Pancreas (tissue), 10 donors: ENCODE measurements at regions of chr5 and their contacts with region 1.

Region 1: GRCh38 chr5:142655339-142656267 is 30.3 kb downstream of the FGF1 start:
- DNase-seq: peak; percentile 56 to 94 (median 82)
- ATAC-seq: peak; percentile 85 to 98 (median 96)
- H3K4me3 ChIP-seq: no peak overlapping the region
- H3K27ac ChIP-seq: no peak overlapping the region
- H3K4me1 ChIP-seq: no peaks in the 10 kb centered on the region
- H3K27me3 ChIP-seq: no peaks in the 10 kb centered on the region
- CTCF ChIP-seq: peak; percentile 80 to 97 (median 94)

Region 2: DNA sequence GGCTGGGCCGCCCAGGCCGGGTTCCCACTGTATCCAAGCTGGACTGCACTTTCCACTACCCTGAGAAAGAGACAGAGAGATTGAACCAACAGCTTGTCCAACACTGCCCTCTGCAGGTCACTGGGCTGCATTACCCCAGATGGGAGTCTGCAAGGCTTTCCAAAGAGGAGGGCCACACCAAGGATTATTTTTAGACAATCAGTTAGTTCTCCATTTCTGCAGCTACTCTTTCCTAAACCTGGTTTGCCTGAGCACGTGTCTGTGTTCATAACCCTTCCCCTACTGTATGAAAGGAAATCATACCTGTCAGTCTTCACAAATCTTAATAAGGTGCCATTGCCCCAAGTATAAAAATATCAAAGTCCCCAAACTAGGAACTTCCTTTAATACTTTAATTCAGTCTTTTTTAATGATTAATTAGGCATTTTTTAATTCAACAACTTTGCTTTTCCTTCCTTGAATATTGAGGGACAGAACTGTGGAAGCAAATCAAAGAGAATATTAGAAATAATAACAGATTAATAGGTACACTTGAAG is 43.6 kb after region 1 on chr5:
- intact Hi-C with region 1: loop called in 2 of 3 experiments (anchors 5 kb)
- DNase-seq: peak; percentile 69 to 91 (median 86)
- ATAC-seq: peak; percentile 91 to 98 (median 96)
- H3K4me3 ChIP-seq: no peak overlapping the region
- H3K27ac ChIP-seq: no peak overlapping the region
- H3K4me1 ChIP-seq: peaks cover 0 to 8% (median 0%) of the 10 kb centered on the region in 3 donors
- H3K27me3 ChIP-seq: no peaks in the 10 kb centered on the region
- CTCF ChIP-seq: peak; percentile 83 to 97 (median 91)

Region 3: GRCh38 chr5:142769741-142770631 is 114.4 kb after region 1 on chr5 and contains the start of gene ARHGAP26:
- intact Hi-C with region 1: no loop called
- DNase-seq: peak; percentile 96 to 99 (median 98)
- ATAC-seq: peak; percentile 95 to 99 (median 98)
- H3K4me3 ChIP-seq: peak within 1 kb of the TSS; percentile 70 to 96 (median 80)
- H3K27ac ChIP-seq: peak within 1 kb of the TSS; percentile 81 to 89 (median 87)
- H3K4me1 ChIP-seq: peaks cover 0 to 9% (median 4%) of the 10 kb centered on the region in 3 donors
- H3K27me3 ChIP-seq: no peaks in the 10 kb centered on the region
- CTCF ChIP-seq: no peak
- total RNA-seq, gene ARHGAP26: 6.0 to 28.1 (median 10.4) TPM

Region 4: DNA sequence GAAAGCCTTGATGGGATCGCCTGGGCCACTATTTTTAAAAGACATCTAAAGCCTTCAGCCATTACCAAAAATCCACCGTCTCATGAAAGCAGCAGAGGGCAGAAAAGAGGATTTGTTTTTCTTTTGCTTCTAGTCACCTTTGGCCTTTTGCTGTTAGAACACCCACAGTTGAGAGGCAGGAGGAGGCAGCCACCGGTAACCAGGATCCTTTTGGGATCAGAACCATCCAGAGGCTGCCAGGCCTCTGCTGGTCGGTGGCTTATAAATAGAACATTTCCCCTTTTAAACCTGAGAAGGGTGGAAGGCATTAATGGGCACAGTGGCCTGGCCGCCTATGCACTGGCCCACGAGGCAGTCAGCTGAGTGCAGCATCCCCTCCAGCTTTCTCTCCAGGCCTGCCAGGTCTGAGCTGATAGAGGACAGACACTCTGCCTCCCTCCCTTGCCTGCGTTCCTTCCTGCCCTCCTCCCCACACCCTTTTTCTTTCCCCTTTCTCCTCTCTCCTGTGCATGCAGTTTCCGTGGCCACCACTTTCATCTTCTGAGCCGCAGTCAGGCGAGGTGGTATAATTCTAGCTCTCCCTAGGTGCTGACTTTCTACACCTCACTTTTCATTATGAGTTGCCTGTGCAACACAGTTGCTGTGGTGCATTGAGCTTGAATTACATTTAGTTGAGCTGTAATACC is 368.0 kb after region 1 on chr5:
- intact Hi-C with region 1: no loop called
- DNase-seq: peak in 2 of 6 donors; percentile 15 to 20
- ATAC-seq: peak in 3 of 4 donors; percentile 54 to 73 (median 67)
- H3K4me3 ChIP-seq: no peak overlapping the region
- H3K27ac ChIP-seq: no peak overlapping the region
- H3K4me1 ChIP-seq: no peaks in the 10 kb centered on the region
- H3K27me3 ChIP-seq: no peaks in the 10 kb centered on the region
- CTCF ChIP-seq: no peak